ENCODE measurements at regions of chr15 and their contacts with region 1.

Region 1: DNA sequence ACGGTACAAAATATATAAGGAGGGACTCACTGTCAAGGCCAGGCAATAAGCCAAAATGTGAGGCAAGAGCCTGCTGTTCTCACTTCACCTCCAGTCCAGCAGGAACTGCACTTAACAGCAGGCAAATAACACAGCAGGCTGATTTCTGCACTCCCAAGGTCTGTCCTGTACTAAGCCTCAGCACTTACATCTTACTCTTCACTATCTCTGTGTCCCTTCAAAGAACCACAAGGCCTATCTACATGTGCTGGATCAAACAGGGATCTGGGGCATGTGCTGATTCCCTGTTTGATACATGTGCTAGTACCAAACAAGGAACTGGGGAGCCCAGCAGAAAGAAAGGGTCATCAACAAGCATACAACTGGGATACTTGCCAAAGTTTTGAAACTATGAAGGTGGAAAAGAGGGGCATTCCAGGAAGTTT is 22.2 kb downstream of the UACA start:
- DNase-seq: no peak
- ATAC-seq: no peak
- H3K4me3 ChIP-seq: no peak overlapping the region
- H3K4me3 Mint-ChIP-seq: no peak overlapping the region
- H3K27ac ChIP-seq: no peak overlapping the region
- H3K27ac Mint-ChIP-seq: no peak overlapping the region
- H3K4me1 ChIP-seq: no peaks in the 10 kb centered on the region
- H3K4me1 Mint-ChIP-seq: no peaks in the 10 kb centered on the region
- H3K27me3 ChIP-seq: no peaks in the 10 kb centered on the region
- H3K27me3 Mint-ChIP-seq: peaks cover 10% of the 10 kb centered on the region
- CTCF ChIP-seq: no peak

Region 2: GRCh38 chr15:70722266-70723121 is 18.6 kb before region 1 on chr15:
- CTCF ChIA-PET with region 1: interaction called, 10 read pairs
- POLR2A ChIA-PET with region 1: no interaction called
- intact Hi-C with region 1: no loop called
- DNase-seq: peak in 2 of 9 experiments; percentile 57 to 70
- ATAC-seq: no peak
- H3K4me3 ChIP-seq: no peak overlapping the region
- H3K4me3 Mint-ChIP-seq: no peak overlapping the region
- H3K27ac ChIP-seq: no peak overlapping the region
- H3K27ac Mint-ChIP-seq: no peak overlapping the region
- H3K4me1 ChIP-seq: no peaks in the 10 kb centered on the region
- H3K4me1 Mint-ChIP-seq: no peaks in the 10 kb centered on the region
- H3K27me3 ChIP-seq: no peaks in the 10 kb centered on the region
- H3K27me3 Mint-ChIP-seq: peaks cover 11% of the 10 kb centered on the region
- CTCF ChIP-seq: peak; percentile 90

Measured in CD8-positive, alpha-beta T cell (primary cell).